ENCODE measurements at regions of chr18 and their contacts with region 1.

Region 1: GRCh38 chr18:32919799-32920198 is 147.0 kb upstream of the KLHL14 start:
- DNase-seq: peak; percentile 76
- H3K4me3 ChIP-seq: no peak overlapping the region
- H3K27ac ChIP-seq: no peak overlapping the region
- H3K4me1 ChIP-seq: no peaks in the 10 kb centered on the region
- H3K27me3 ChIP-seq: no peaks in the 10 kb centered on the region
- CTCF ChIP-seq: peak; percentile 64

Region 2: DNA sequence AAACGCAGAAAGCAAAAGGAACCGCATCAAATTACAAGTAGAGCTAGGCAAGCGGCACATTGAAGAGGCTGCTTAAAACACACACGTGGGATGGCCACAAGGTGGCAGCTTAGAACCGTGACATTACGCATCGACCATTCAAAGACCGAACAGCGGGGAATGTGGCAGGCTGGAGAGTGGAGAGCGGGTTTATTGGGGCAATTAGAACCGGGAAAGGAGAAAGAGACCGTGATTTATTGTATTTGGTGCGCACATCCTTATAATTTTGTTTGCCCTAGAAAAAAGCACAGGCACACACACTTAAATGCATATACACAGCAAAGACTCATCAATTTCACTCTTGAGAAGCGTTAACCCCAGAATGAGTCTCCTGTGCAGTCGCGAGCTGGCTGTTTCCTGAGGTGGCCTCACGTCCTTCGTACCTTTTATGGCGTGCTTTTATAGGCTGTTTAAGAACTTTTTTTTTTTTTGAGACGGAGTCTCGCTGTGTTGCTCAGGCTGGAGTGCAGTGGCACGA is 761.6 kb before region 1 on chr18:
- CTCF ChIA-PET with region 1: no interaction called
- POLR2A ChIA-PET with region 1: no interaction called
- intact Hi-C with region 1: loop called (anchors 10 kb)
- DNase-seq: peak; percentile 94
- H3K4me3 ChIP-seq: peak overlapping the region; percentile 29
- H3K27ac ChIP-seq: no peak overlapping the region
- H3K4me1 ChIP-seq: peaks cover 7% of the 10 kb centered on the region
- H3K27me3 ChIP-seq: no peaks in the 10 kb centered on the region
- CTCF ChIP-seq: peak; percentile 92

Region 3: DNA sequence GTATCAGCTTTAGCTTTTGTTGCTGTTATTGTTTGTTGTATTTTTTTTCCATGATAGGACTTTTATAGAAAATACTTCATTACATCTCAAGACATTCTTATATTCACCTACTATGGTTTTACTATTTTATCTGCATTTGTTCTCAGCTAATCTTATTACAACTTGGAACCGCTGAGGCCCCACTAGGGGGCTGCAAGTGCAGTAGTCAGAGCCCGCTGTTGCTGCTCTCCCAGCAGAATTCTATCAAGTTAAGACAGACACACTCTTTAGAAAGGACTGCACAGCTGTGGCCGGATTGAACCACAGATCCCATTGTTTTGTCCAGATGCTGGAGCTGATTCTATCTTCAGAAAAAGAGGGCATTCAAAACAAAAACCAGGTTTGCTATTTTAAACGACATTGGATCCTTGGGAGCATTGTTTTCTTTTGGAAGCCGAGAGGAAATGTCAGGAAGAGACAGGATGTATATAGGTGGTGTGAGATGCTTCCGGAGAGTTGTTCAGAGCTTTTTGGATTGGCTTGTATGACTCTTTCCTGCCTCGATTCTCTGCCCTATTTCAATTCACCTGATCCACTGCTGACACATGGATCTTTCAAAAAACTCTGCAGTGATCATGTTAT is 343.4 kb before region 1 on chr18:
- CTCF ChIA-PET with region 1: no interaction called
- POLR2A ChIA-PET with region 1: no interaction called
- intact Hi-C with region 1: loop called (anchors 10 kb)
- DNase-seq: peak; percentile 53
- H3K4me3 ChIP-seq: no peak overlapping the region
- H3K27ac ChIP-seq: no peak overlapping the region
- H3K4me1 ChIP-seq: no peaks in the 10 kb centered on the region
- H3K27me3 ChIP-seq: peaks cover 9% of the 10 kb centered on the region
- CTCF ChIP-seq: peak; percentile 68

Region 4: DNA sequence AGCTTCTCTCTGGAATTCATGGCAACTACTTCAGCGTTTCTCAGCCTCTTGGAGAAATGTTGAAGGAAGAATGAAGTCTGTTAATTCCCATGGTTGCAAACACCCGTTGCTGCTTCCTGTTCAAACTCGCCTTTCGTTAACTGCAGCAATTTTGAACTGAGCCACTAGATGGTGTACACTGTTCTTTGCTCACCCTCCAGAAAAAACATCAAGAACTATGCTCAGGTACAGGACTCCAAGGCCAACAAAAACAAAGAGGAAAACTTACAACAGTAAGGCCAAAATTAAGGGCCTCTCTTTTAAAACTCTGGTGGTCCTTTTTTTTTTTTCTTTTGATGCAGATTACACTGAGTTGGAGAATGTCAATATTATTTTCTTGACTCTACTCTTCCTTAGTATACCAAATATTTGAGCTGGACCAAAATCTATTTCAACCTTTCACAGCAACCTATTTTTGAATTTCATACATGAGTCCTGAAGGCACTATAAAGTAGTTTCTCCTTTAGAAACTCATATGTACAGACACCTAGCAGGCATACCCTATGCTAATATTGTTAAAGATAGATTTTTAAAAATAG is 205.1 kb before region 1 on chr18:
- CTCF ChIA-PET with region 1: interaction called, 4 read pairs
- POLR2A ChIA-PET with region 1: no interaction called
- intact Hi-C with region 1: loop called (anchors 5 kb)
- DNase-seq: peak; percentile 82
- H3K4me3 ChIP-seq: no peak overlapping the region
- H3K27ac ChIP-seq: no peak overlapping the region
- H3K4me1 ChIP-seq: no peaks in the 10 kb centered on the region
- H3K27me3 ChIP-seq: no peaks in the 10 kb centered on the region
- CTCF ChIP-seq: peak; percentile 86

Region 5: GRCh38 chr18:33123862-33124518 is 204.2 kb after region 1 on chr18:
- CTCF ChIA-PET with region 1: no interaction called
- POLR2A ChIA-PET with region 1: interaction called, 16 read pairs
- intact Hi-C with region 1: no loop called
- DNase-seq: no peak
- H3K4me3 ChIP-seq: no peak overlapping the region
- H3K27ac ChIP-seq: no peak overlapping the region
- H3K4me1 ChIP-seq: no peaks in the 10 kb centered on the region
- H3K27me3 ChIP-seq: no peaks in the 10 kb centered on the region
- CTCF ChIP-seq: no peak

Measured in A673 (cell line).